ENCODE measurements at regions of chr5 and their contacts with region 1.

Region 1: GRCh38 chr5:61933787-61934626 is 372.0 kb upstream of the KIF2A start:
- DNase-seq: peak in 9 of 10 donors; percentile 13 to 91 (median 64)

Region 2: DNA sequence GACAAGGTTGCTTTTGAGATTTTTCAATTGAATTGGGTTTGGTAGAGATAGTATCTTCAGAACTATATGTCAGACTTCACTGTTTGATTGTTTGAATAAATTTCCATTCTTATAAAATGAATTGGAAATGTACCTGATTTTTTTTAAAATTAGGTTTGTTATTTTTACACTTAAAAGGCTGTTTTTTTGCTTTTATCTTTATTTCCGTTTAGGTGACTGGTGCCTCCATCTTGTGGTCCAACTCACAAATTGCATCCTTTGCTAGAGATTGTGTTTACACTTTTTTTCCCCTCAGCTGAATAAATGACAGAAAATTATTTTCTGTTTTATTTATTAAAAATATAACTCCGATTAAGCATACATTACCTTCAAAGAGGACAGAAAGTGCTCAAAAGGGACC is 973.4 kb before region 1 on chr5:
- intact Hi-C with region 1: loop called (anchors 5 kb)
- DNase-seq: no peak

Region 3: GRCh38 chr5:61055434-61056006 is 878.5 kb before region 1 on chr5:
- intact Hi-C with region 1: loop called (anchors 10 kb)
- DNase-seq: no peak

Region 4: DNA sequence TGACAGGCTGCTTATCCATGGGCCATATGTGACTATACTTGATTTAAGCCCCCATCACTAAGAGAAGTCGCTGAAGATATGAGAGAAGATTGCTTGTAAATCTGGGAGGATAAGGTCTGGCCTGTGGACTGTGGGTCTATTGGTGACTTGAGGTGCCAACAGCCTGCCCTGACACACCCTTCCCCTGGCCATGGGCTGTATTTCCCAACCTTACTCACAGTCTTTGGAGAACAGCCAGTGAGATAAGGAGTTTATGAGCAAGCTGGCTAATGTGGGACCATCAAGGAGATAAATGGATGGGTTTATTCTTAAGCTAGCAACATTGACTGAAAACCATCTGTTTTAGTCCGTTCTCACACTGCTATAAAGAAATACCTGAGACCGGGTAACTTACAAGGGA is 370.6 kb before region 1 on chr5:
- intact Hi-C with region 1: no loop called
- DNase-seq: no peak

Region 5: GRCh38 chr5:61758711-61759495 is 175.1 kb before region 1 on chr5:
- intact Hi-C with region 1: no loop called
- DNase-seq: no peak

Region 6: DNA sequence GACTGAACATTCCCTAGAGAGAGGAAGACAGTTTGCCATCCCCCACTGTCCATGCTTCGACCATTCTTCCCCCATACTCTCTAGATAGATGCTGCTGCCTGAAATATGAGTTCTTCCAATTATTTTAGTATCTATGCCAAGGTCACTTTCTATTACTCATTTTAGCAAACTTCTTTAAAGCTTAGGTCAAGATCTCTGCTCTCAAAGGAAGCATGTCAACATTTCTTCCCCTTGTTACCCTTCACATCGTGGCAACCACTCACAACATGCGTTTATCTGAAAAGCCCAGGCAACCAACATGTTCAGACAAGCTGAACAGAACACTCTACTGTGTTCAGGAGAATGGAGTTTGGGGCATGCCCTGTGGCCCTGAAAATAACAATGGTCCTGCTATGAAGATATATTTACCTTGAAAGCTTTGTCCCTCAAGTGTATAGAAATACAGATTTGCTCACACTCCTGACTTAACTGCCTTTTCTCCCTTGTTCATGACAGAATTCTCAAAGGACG is 233.6 kb after region 1 on chr5:
- intact Hi-C with region 1: no loop called
- DNase-seq: no peak